ENCODE measurements at regions of chr11 and their contacts with region 1.

Region 1: GRCh38 chr11:20658135-20658534 is 11.3 kb upstream of the NELL1 start:
- DNase-seq: no peak
- H3K4me3 ChIP-seq: no peak overlapping the region
- H3K4me1 ChIP-seq: no peaks in the 10 kb centered on the region
- H3K27me3 ChIP-seq: no peaks in the 10 kb centered on the region

Region 2: GRCh38 chr11:20754933-20755332 is 96.8 kb after region 1 on chr11:
- in situ Hi-C with region 1: no loop called
- DNase-seq: peak in 1 of 2 experiments; percentile 27
- H3K4me3 ChIP-seq: no peak overlapping the region
- H3K4me1 ChIP-seq: no peaks in the 10 kb centered on the region
- H3K27me3 ChIP-seq: no peaks in the 10 kb centered on the region

Region 3: GRCh38 chr11:20861322-20861721 is 203.2 kb after region 1 on chr11:
- in situ Hi-C with region 1: loop called (anchors 10 kb)
- DNase-seq: no peak
- H3K4me3 ChIP-seq: no peak overlapping the region
- H3K4me1 ChIP-seq: no peaks in the 10 kb centered on the region
- H3K27me3 ChIP-seq: no peaks in the 10 kb centered on the region

Region 4: GRCh38 chr11:21105196-21105917 is 447.2 kb after region 1 on chr11:
- in situ Hi-C with region 1: no loop called
- DNase-seq: no peak
- H3K4me3 ChIP-seq: no peak overlapping the region
- H3K4me1 ChIP-seq: peaks cover 3% of the 10 kb centered on the region; the same call in 1 of the 2 replicates
- H3K27me3 ChIP-seq: no peaks in the 10 kb centered on the region

Measured in HAP-1 (cell line).